Kidney (tissue), 22 donors: ENCODE measurements at regions of chr2 and their contacts with region 1.

Region 1: DNA sequence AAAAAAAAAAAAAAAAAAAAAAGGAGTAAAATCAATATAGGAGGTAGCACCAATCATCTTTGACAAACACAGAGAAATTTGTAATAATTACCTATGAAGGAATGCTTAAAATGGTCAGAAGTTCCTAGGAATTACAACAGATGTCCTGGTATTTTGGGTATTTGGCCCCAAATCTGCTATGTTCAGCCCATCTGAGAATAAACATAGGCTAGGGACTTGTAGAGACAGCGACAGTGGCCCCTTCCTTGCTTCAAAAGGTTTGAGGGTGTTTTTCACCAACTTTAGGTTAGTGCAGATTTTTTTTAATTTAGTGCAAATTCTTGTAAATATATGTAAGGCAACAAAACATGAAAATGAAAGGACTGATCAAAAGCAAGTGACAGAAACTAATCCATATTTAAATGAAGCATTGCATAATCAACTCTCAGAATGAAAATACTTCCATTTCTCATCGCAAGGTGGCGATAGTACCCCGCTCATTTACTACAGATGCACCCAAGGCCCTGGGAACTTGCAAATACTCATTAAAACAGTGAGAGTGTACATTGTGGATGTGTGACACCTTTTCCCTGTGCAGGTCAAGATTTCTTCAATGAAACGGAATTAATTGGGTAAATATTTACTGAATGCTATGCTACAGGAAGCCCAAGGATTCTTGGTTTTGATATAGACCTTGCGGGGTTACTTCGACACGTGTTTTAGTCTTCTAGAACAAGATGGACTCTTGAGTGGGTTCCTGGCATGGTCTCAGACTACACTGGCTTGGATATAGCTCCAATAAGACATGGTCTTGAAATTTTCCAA is 44.6 kb downstream of the FAM124B start:
- DNase-seq: peak in 4 of 5 donors; percentile 53 to 76 (median 60)
- H3K4me3 ChIP-seq: no peak overlapping the region
- H3K27ac ChIP-seq: no peak overlapping the region
- H3K4me1 ChIP-seq: no peaks in the 10 kb centered on the region
- H3K27me3 ChIP-seq: no peaks in the 10 kb centered on the region
- CTCF ChIP-seq: peak; percentile 86

Region 2: DNA sequence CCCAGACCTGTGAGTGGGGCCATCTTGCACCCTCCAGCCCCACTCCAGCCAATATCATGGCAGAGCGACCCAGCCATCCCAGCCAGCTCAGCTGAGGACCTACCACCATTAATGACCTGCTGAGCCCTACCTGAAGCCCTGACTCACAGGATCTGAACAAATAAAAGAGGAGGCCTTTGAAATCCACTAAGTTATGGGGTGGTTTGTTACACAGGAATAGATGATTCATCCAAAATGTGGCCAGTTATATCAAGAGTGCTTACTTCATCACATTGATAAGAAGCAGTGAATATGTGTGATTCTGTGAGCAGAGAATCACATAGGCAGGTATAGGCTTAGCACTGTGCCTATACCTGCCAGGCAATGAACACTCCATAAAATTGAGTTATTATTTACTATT is 79.3 kb after region 1 on chr2:
- intact Hi-C with region 1: no loop called
- DNase-seq: no peak
- H3K4me3 ChIP-seq: no peak overlapping the region
- H3K27ac ChIP-seq: no peak overlapping the region
- H3K4me1 ChIP-seq: no peaks in the 10 kb centered on the region
- H3K27me3 ChIP-seq: no peaks in the 10 kb centered on the region
- CTCF ChIP-seq: no peak

Region 3: DNA sequence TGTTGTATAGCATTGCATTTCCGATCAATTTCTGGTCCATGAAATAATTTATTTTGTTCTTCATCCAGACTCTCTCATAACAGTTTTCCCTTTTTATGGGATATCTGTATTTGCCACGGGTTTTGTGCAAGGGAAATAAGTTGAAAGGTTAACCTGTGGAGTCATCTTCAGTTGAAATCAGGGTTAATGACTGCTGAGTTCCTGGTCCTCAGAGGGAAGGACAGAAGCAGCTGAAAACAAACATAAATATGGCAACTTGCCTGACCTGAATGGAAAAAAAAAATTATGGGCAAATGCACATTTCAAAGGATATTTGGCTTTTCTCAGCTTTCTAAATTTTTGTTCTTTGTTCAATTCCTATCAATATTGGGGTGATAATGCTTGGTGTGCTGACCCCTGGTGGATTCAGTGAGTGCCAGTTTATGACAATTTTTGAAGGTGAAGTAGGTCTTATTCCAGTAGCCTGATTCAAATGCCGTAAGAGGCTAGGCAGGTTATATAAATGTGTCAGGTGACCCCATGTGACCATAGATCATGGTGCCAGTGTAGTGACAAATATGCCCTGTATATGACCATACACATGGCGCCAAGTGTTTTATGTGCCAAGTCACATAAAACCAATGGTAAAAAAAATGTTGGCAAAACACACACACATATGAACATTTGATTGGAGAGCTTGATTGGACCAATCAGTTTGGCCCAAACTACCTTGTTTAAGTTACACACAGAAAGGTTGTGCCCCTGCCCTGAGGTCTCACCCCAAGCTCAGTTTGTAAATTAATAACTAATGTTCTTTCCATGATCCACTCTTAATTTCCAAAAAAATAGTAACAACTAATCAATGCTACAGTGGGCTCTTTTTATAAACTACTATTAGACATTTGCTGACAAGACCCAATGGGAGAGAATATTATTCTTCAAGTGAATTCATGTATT is 92.2 kb after region 1 on chr2:
- intact Hi-C with region 1: no loop called
- DNase-seq: peak in 1 of 5 donors; percentile 29
- H3K4me3 ChIP-seq: no peak overlapping the region
- H3K27ac ChIP-seq: no peak overlapping the region
- H3K4me1 ChIP-seq: no peaks in the 10 kb centered on the region
- H3K27me3 ChIP-seq: no peaks in the 10 kb centered on the region
- CTCF ChIP-seq: peak; percentile 53

Region 4: DNA sequence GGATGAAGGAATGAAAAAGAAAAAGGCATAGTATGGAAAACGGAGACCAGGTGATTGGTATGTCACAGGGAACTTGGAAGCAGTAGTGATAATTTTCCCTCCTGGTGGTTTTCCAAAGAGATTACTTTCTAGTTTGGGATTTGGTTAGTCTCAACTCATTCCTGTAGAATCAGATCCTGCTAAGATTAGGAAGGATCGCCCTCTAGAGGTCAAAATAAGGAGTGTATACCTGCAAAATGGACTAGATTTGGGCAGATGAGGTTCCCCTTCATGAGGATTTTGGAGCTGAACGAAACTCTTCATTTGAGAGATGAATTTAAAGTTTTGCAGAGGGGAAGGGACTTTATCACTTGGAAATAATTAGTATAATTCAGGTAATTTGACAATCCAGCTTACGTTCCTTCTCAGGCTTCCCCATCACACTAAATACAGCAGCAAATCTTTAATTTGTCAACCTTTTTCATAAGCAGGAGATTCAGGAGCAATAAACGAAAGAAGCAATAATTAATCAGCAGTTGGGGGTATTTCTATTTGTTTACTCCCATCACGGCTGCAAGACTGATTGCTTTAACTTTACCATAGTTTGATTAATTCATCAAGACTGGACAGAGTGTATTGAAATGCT is 293.6 kb after region 1 on chr2:
- intact Hi-C with region 1: loop called (anchors 5 kb)
- DNase-seq: peak in 2 of 5 donors; percentile 54 to 78
- H3K4me3 ChIP-seq: no peak overlapping the region
- H3K27ac ChIP-seq: no peak overlapping the region
- H3K4me1 ChIP-seq: no peaks in the 10 kb centered on the region
- H3K27me3 ChIP-seq: no peaks in the 10 kb centered on the region
- CTCF ChIP-seq: peak; percentile 80

Region 5: GRCh38 chr2:225091336-225091735 is 734.0 kb after region 1 on chr2:
- intact Hi-C with region 1: no loop called
- DNase-seq: no peak
- H3K4me3 ChIP-seq: no peak overlapping the region
- H3K27ac ChIP-seq: no peak overlapping the region
- H3K4me1 ChIP-seq: no peaks in the 10 kb centered on the region
- H3K27me3 ChIP-seq: no peaks in the 10 kb centered on the region
- CTCF ChIP-seq: no peak